Naive thymus-derived CD4-positive, alpha-beta T cell (primary cell): ENCODE measurements at regions of chr16 and their contacts with region 1.

Region 1: GRCh38 chr16:78002915-78003538 is 19.3 kb upstream of the CLEC3A start:
- DNase-seq: peak; percentile 15 to 69 (median 46)
- ATAC-seq: peak; percentile 86
- H3K4me3 ChIP-seq: no peak overlapping the region
- H3K4me3 Mint-ChIP-seq: no peak overlapping the region
- H3K27ac ChIP-seq: no peak overlapping the region
- H3K27ac Mint-ChIP-seq: peak overlapping the region in 1 of 9 donors; percentile 59
- H3K4me1 ChIP-seq: no peaks in the 10 kb centered on the region
- H3K4me1 Mint-ChIP-seq: peaks cover 0 to 6% (median 0%) of the 10 kb centered on the region in 7 donors
- H3K27me3 ChIP-seq: no peaks in the 10 kb centered on the region
- H3K27me3 Mint-ChIP-seq: peaks cover 0 to 18% (median 8%) of the 10 kb centered on the region in 5 donors

Region 2: GRCh38 chr16:77722309-77723107 is 280.5 kb before region 1 on chr16 and contains the start of gene NUDT7:
- CTCF ChIA-PET with region 1: no interaction called
- POLR2A ChIA-PET with region 1: no interaction called
- intact Hi-C with region 1: loop called in 1 of 2 experiments (anchors 1 kb)
- DNase-seq: peak; percentile 78 to 98 (median 88)
- ATAC-seq: peak; percentile 98
- H3K4me3 ChIP-seq: peak within 1 kb of the TSS; percentile 76
- H3K4me3 Mint-ChIP-seq: peak within 1 kb of the TSS; percentile 86 to 94 (median 90)
- H3K27ac ChIP-seq: peak within 1 kb of the TSS; percentile 71
- H3K27ac Mint-ChIP-seq: peak within 1 kb of the TSS; percentile 51 to 91 (median 85)
- H3K4me1 ChIP-seq: peaks cover 5 to 9% of the 10 kb centered on the region in 2 donors
- H3K4me1 Mint-ChIP-seq: peaks cover 7 to 21% (median 15%) of the 10 kb centered on the region in 7 donors
- H3K27me3 ChIP-seq: no peaks in the 10 kb centered on the region
- H3K27me3 Mint-ChIP-seq: no peaks in the 10 kb centered on the region
- total RNA-seq, gene NUDT7: 2.1 to 10.9 (median 8.2) TPM

Region 3: DNA sequence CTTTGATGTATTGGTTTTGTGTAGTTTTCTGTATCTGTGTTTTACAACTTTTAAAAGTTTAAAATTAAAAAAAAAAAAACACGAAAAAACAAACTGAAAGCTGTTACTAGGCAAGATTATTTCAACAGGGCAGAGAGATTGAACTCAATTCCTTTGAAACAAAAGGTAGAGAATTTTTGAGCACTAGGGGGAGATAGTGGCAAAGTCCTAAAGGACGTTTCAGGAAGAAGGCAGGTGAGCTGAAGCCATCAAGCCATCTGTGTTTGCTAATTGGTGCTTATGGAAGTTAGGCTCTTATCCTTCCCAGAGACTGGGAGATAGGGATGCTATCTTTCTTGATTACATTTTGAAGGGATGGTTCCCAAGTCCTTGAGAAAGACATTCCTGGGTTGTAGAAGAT is 51.3 kb before region 1 on chr16:
- CTCF ChIA-PET with region 1: no interaction called
- POLR2A ChIA-PET with region 1: no interaction called
- intact Hi-C with region 1: loop called in 1 of 2 experiments (anchors 5 kb)
- DNase-seq: peak in 1 of 9 donors; percentile 4
- ATAC-seq: no peak
- H3K4me3 ChIP-seq: no peak overlapping the region
- H3K4me3 Mint-ChIP-seq: no peak overlapping the region
- H3K27ac ChIP-seq: no peak overlapping the region
- H3K27ac Mint-ChIP-seq: no peak overlapping the region
- H3K4me1 ChIP-seq: no peaks in the 10 kb centered on the region
- H3K4me1 Mint-ChIP-seq: no peaks in the 10 kb centered on the region
- H3K27me3 ChIP-seq: no peaks in the 10 kb centered on the region
- H3K27me3 Mint-ChIP-seq: peaks cover 4 to 32% (median 20%) of the 10 kb centered on the region in 5 donors

Region 4: GRCh38 chr16:77971306-77972271 is 31.4 kb before region 1 on chr16:
- CTCF ChIA-PET with region 1: no interaction called
- POLR2A ChIA-PET with region 1: no interaction called
- intact Hi-C with region 1: loop called in 1 of 2 experiments (anchors 1 kb)
- DNase-seq: peak; percentile 21 to 73 (median 55)
- ATAC-seq: peak; percentile 55
- H3K4me3 ChIP-seq: no peak overlapping the region
- H3K4me3 Mint-ChIP-seq: no peak overlapping the region
- H3K27ac ChIP-seq: no peak overlapping the region
- H3K27ac Mint-ChIP-seq: no peak overlapping the region
- H3K4me1 ChIP-seq: no peaks in the 10 kb centered on the region
- H3K4me1 Mint-ChIP-seq: no peaks in the 10 kb centered on the region
- H3K27me3 ChIP-seq: no peaks in the 10 kb centered on the region
- H3K27me3 Mint-ChIP-seq: peaks cover 2 to 18% (median 12%) of the 10 kb centered on the region in 5 donors

Region 5: GRCh38 chr16:78249068-78249467 is 246.0 kb after region 1 on chr16:
- CTCF ChIA-PET with region 1: no interaction called
- POLR2A ChIA-PET with region 1: no interaction called
- intact Hi-C with region 1: no loop called
- DNase-seq: no peak
- ATAC-seq: no peak
- H3K4me3 ChIP-seq: no peak overlapping the region
- H3K4me3 Mint-ChIP-seq: no peak overlapping the region
- H3K27ac ChIP-seq: no peak overlapping the region
- H3K27ac Mint-ChIP-seq: no peak overlapping the region
- H3K4me1 ChIP-seq: no peaks in the 10 kb centered on the region
- H3K4me1 Mint-ChIP-seq: peaks cover 0 to 6% (median 0%) of the 10 kb centered on the region in 7 donors
- H3K27me3 ChIP-seq: no peaks in the 10 kb centered on the region
- H3K27me3 Mint-ChIP-seq: no peaks in the 10 kb centered on the region